SK-N-SH (cell line): ENCODE measurements at regions of chr6 and their contacts with region 1.

Region 1: DNA sequence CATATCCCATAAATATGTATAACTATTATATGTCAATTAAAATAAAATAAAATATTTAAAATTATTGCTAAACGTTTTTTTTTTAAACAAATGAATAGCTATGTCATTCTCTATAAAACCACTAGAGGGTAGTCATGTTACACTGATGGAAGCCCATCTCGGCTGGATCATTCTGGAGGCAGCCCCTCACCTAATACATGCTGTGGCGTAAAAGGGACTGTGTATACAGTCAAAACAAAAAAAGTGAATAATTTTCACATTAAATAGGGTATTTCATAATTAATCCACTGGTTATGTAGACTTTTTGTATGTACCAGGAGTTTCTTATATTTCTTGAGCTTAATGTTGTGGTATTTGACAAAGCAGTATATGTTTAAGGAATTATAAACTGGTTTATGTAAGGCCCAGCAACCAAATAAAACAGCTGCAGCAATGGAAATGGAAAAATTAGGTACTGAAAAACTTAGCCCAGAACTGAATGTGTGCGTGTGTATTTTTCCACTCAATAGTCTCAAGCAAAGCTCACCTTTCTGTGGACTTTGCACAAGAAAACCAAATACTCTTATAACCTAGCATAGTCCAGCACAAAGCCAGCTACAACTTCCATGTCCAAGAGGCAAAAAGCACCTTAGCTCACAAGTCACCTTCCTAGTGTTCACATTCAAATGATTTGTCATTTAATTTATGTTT is 81.7 kb downstream of the COL9A1 start:
- DNase-seq: peak; percentile 68
- H3K4me3 ChIP-seq: no peak overlapping the region
- H3K27ac ChIP-seq: no peak overlapping the region
- H3K4me1 ChIP-seq: no peaks in the 10 kb centered on the region; a peak in 2 of 4 replicates
- H3K27me3 ChIP-seq: peaks cover 8% of the 10 kb centered on the region; the same call in 1 of the 2 replicates
- CTCF ChIP-seq: peak; percentile 68
- EP300 ChIP-seq: no peak
- RAD21 ChIP-seq: peak; percentile 90

Region 2: DNA sequence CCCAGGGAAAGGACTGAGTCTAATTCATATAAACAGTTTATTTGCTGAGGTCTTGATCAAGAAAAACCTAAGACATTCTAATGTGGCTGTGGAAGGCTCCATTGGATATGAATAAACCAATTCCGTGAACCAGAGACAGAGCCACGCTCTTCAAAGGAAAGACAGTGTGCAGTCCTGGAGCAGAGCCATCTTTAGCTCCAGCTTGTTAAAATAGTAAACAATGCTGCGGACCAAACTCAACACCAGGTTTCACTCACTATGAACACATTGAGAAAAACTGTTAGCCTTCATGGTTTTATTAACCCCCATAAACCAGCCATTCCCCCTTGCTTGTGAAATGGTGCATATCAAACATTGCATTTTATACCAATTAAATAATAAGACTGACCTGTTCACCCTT is 19.9 kb after region 1 on chr6:
- CTCF ChIA-PET with region 1: interaction called, 16 read pairs
- POLR2A ChIA-PET with region 1: no interaction called
- DNase-seq: no peak
- H3K4me3 ChIP-seq: no peak overlapping the region
- H3K27ac ChIP-seq: no peak overlapping the region
- H3K4me1 ChIP-seq: no peaks in the 10 kb centered on the region
- H3K27me3 ChIP-seq: no peaks in the 10 kb centered on the region; the same call in 1 of the 2 replicates
- CTCF ChIP-seq: no peak
- EP300 ChIP-seq: no peak
- RAD21 ChIP-seq: no peak

Region 3: GRCh38 chr6:70282312-70282918 is 61.2 kb after region 1 on chr6:
- CTCF ChIA-PET with region 1: interaction called, 10 read pairs
- POLR2A ChIA-PET with region 1: no interaction called
- DNase-seq: peak; percentile 42
- H3K4me3 ChIP-seq: peak overlapping the region in 1 of 2 experiments; percentile 2; a peak in 1 of 4 replicates
- H3K27ac ChIP-seq: no peak overlapping the region
- H3K4me1 ChIP-seq: no peaks in the 10 kb centered on the region; a peak in 2 of 4 replicates
- H3K27me3 ChIP-seq: no peaks in the 10 kb centered on the region
- CTCF ChIP-seq: no peak
- EP300 ChIP-seq: no peak
- RAD21 ChIP-seq: no peak

Region 4: DNA sequence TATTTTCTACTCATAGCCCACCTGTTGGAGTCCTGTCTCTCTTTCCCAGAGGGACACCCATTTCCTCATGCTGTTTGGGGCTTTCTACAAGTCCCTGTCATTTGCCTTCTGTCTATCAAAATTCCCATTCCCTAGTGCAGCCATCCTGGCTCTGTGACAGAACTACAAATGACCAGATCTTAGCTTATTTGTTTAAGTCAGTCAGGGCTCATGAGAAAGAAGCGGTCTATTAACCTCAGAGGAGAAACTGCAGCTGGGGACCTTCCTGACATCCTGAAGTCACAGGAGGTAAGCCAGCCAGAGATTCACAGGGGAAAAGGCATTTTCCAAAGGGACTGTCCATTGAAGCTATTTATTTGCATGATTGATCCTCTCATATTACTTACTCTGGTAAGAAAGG is 83.4 kb after region 1 on chr6:
- CTCF ChIA-PET with region 1: interaction called, 50 read pairs
- POLR2A ChIA-PET with region 1: no interaction called
- DNase-seq: no peak
- H3K4me3 ChIP-seq: no peak overlapping the region
- H3K27ac ChIP-seq: no peak overlapping the region
- H3K4me1 ChIP-seq: no peaks in the 10 kb centered on the region
- H3K27me3 ChIP-seq: no peaks in the 10 kb centered on the region; the same call in 1 of the 2 replicates
- CTCF ChIP-seq: no peak
- EP300 ChIP-seq: no peak
- RAD21 ChIP-seq: no peak

Region 5: GRCh38 chr6:70369332-70369950 is 148.3 kb after region 1 on chr6:
- CTCF ChIA-PET with region 1: interaction called, 104 read pairs
- POLR2A ChIA-PET with region 1: no interaction called
- DNase-seq: peak; percentile 60
- H3K4me3 ChIP-seq: peak overlapping the region in 1 of 2 experiments; percentile 24; a peak in 1 of 4 replicates
- H3K27ac ChIP-seq: no peak overlapping the region
- H3K4me1 ChIP-seq: no peaks in the 10 kb centered on the region; a peak in 2 of 4 replicates
- H3K27me3 ChIP-seq: peaks cover 6% of the 10 kb centered on the region; the same call in 1 of the 2 replicates
- CTCF ChIP-seq: peak; percentile 89
- EP300 ChIP-seq: no peak
- RAD21 ChIP-seq: peak; percentile 85

Region 6: GRCh38 chr6:70456735-70457134 is 235.6 kb after region 1 on chr6:
- CTCF ChIA-PET with region 1: no interaction called
- POLR2A ChIA-PET with region 1: no interaction called
- DNase-seq: no peak
- H3K4me3 ChIP-seq: no peak overlapping the region
- H3K27ac ChIP-seq: no peak overlapping the region
- H3K4me1 ChIP-seq: no peaks in the 10 kb centered on the region
- H3K27me3 ChIP-seq: no peaks in the 10 kb centered on the region
- CTCF ChIP-seq: no peak
- EP300 ChIP-seq: no peak
- RAD21 ChIP-seq: no peak

Region 7: DNA sequence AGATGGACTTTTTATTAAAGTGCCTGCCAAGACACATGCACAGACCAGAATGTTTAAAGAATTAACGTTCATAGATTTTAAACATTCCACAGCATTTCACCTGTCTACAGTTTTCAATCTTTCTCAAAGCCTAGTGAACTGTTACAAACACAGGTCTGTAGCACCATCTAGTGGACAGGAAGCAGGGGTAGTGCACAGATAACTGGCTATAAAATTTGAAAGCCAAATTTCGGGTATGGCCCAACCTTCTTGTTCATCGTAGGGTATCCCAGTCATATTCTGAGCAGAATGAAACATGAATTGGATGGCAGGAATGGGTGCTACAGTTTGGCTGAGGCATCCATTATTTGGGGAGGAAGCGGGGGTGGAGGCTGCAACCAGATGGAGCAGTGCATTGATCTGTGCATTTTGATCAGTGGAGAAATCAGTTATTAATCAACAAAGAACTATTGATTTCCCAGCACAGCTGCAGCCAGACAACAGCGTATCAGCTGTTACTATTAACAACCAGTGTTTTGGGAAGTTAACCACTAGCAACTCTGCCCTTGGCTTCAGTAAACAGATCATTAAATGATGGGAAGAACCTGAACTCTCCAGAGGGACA is 791.8 kb after region 1 on chr6:
- CTCF ChIA-PET with region 1: interaction called, 23 read pairs
- POLR2A ChIA-PET with region 1: no interaction called
- DNase-seq: peak; percentile 56
- H3K4me3 ChIP-seq: no peak overlapping the region
- H3K27ac ChIP-seq: no peak overlapping the region
- H3K4me1 ChIP-seq: no peaks in the 10 kb centered on the region
- H3K27me3 ChIP-seq: no peaks in the 10 kb centered on the region
- CTCF ChIP-seq: peak; percentile 86
- EP300 ChIP-seq: no peak
- RAD21 ChIP-seq: peak; percentile 90